ENCODE measurements at regions of chr4 and their contacts with region 1.

Region 1: DNA sequence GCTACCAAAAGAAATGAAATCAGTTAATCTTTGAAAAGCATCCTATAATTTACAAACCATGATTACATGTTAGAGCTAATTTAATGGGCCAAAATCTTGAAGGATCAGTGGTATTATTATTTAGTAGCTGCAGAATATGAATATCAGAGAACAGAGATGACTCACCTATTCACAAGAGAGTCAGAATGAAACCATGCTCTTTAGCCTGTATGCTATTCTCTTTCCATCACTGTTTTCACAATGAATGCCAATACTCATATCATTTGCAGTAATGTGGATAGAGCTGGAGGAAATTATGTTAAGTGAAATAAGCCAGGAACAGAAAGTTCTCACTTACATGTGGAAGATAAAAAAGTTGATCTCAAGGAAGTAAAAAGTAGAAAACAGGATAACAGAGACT is 414.1 kb downstream of the CENPC start:
- DNase-seq: no peak
- H3K4me3 ChIP-seq: no peak overlapping the region
- H3K27ac ChIP-seq: no peak overlapping the region
- H3K4me1 ChIP-seq: no peaks in the 10 kb centered on the region
- H3K27me3 ChIP-seq: no peaks in the 10 kb centered on the region
- CTCF ChIP-seq: no peak
- EP300 ChIP-seq: no peak
- POLR2A ChIP-seq: no peak

Region 2: GRCh38 chr4:67141586-67141985 is 10.4 kb after region 1 on chr4:
- intact Hi-C with region 1: no loop called
- DNase-seq: no peak
- H3K4me3 ChIP-seq: no peak overlapping the region
- H3K27ac ChIP-seq: no peak overlapping the region
- H3K4me1 ChIP-seq: no peaks in the 10 kb centered on the region
- H3K27me3 ChIP-seq: no peaks in the 10 kb centered on the region
- CTCF ChIP-seq: no peak
- EP300 ChIP-seq: no peak
- POLR2A ChIP-seq: no peak

Region 3: DNA sequence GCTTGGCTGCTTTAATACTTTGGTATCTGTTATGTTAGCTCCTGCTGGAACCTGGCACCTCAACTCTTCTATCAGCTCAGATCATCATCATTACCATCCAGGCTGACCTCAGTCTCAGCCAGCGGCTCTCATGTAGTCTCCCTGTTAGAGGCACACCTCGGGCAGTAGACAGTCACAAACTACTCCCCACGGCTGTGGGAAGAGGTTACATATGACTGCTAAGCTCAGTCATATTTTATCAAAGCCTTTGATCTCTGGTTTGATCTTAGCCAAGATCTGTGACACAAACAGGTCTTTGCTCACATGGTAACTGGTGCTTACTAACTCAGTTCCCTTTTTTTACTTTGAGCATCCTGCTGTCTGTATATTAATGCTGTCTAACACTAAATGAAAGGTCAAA is 29.2 kb after region 1 on chr4:
- intact Hi-C with region 1: loop called in 1 of 4 experiments (anchors 2 kb)
- DNase-seq: no peak
- H3K4me3 ChIP-seq: no peak overlapping the region
- H3K27ac ChIP-seq: no peak overlapping the region
- H3K4me1 ChIP-seq: no peaks in the 10 kb centered on the region
- H3K27me3 ChIP-seq: no peaks in the 10 kb centered on the region
- CTCF ChIP-seq: no peak
- EP300 ChIP-seq: no peak
- POLR2A ChIP-seq: no peak